Activated T-helper 2 cell treated with anti-CD3 and anti-CD28 coated beads, Interferon-gamma antibody, Interleukin-2, Interleukin-4, amounts not matched to agents 10 μg/mL and 5 μg/mL and 100 μg/mL, durations not matched to agents 14 hours and 24 hours and 36 hours (primary cell): ENCODE measurements at regions of chr6 and their contacts with region 1.

Region 1: GRCh38 chr6:41560431-41561192 is 14.4 kb downstream of the FOXP4 start:
- DNase-seq: peak; percentile 77
- H3K4me3 Mint-ChIP-seq: peak overlapping the region; percentile 81
- H3K27ac Mint-ChIP-seq: peak overlapping the region; percentile 50
- H3K4me1 Mint-ChIP-seq: peaks cover 14% of the 10 kb centered on the region
- H3K27me3 Mint-ChIP-seq: peaks cover 19% of the 10 kb centered on the region

Region 2: DNA sequence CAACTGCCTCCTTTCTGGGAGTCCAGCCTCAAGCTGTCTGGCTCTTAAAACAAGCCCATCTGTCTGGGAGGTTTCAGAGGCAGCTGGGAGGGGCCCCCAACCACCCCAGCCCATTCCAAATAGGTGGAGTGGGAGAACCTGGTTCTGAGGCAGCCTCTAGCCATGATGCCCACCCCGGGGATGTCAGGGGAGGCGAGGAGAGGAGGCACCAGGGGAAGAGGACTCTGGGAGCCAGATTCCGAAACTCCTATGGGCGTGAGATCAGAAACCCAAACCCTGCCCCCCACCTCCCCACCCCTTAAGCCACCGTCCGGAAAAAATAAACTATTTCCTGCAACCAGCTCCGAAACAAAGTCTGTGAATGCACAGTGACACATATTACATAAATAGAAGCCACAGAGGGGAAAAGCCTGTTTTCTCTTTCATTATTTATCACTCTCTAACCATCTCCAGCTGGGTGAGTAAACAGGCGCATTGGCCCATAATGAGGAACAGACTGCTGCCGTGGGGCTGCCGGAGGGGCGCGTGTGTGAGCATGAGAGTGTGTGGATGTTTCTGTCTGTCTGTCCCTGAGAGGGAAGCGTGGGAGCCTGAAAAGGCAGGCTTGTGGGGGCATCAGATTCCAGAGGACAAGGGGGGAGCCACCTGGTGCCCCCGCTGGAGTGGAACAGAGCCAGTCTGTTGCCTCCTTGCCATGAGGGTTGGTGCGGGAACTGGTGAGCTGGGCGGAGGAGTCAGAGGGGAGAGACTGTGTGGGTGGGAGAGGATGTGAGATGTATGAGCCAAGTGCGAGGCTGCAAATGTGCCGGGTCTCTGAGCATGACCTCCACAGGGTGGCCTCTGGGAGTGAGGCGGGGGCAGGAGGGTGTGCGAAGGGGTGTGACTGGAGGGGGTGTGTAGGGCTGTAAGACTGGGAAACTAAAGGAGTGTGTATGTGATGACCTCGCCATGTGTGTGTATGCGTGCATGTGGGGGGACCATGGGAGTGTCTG is 28.7 kb before region 1 on chr6:
- intact Hi-C with region 1: loop called (anchors 1 kb)
- DNase-seq: peak; percentile 45
- H3K4me3 Mint-ChIP-seq: peak overlapping the region; percentile 53
- H3K27ac Mint-ChIP-seq: peak overlapping the region; percentile 70
- H3K4me1 Mint-ChIP-seq: peaks cover 16% of the 10 kb centered on the region
- H3K27me3 Mint-ChIP-seq: peaks cover 73% of the 10 kb centered on the region

Region 3: DNA sequence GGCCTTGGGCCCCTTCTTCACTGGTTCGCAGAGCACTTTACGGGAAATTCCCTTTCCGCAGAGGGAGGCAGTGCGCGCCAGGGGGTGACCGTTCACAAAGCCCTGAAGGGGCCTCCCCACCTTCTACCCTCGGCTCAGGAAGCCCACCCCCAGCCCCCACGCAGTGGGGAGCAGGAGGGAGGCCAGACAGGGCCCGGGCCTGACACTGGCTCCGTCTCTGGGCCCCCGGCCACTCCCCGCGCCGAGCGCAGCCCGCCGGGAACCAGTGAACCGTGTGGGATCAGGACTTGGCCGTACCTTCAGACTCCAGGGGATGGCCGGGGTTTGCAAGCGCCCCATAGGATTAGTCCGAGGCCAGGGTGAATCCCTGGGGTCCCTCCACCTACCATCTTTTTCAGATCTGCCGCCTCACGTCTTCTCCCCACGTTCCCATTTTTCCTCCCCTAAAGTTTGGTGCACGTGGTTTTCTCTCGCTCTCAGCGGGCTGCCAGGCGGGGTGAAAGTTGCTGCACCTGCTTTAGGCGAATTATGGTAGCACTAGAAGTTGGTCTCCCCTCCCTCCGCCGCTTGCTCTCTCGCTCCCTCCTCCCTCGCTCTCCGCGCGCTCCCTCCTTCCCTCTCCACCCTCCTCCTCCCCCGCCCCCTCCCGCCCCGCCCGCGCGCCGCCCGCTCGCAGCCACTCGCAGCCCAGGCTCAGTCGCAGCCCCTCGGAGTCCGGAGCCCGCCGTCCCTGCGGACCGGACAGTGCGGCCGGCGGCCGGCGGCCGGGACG is 14.7 kb before region 1 on chr6 and contains the start of gene FOXP4:
- intact Hi-C with region 1: loop called (anchors 1 kb)
- DNase-seq: peak; percentile 77
- H3K4me3 Mint-ChIP-seq: peak within 1 kb of the TSS; percentile 86
- H3K27ac Mint-ChIP-seq: peak within 1 kb of the TSS; percentile 50
- H3K4me1 Mint-ChIP-seq: peaks cover 22% of the 10 kb centered on the region
- H3K27me3 Mint-ChIP-seq: peaks cover 72% of the 10 kb centered on the region
- total RNA-seq, gene FOXP4: 9.6 and 9.7 TPM in 2 replicates

Region 4: GRCh38 chr6:41622206-41622958 is 61.8 kb after region 1 on chr6:
- intact Hi-C with region 1: no loop called
- DNase-seq: no peak
- H3K4me3 Mint-ChIP-seq: no peak overlapping the region
- H3K27ac Mint-ChIP-seq: no peak overlapping the region
- H3K4me1 Mint-ChIP-seq: peaks cover 6% of the 10 kb centered on the region
- H3K27me3 Mint-ChIP-seq: peaks cover 19% of the 10 kb centered on the region

Region 5: GRCh38 chr6:43059168-43060033 is 1498.8 kb after region 1 on chr6 and contains the starts of genes KLC4 and MRPL2:
- intact Hi-C with region 1: loop called (anchors 10 kb)
- DNase-seq: peak; percentile 96
- H3K4me3 Mint-ChIP-seq: peak within 1 kb of the TSS; percentile 93
- H3K27ac Mint-ChIP-seq: peak within 1 kb of the TSS; percentile 98
- H3K4me1 Mint-ChIP-seq: peaks cover 28% of the 10 kb centered on the region
- H3K27me3 Mint-ChIP-seq: no peaks in the 10 kb centered on the region
- total RNA-seq, gene KLC4: 11.7 and 14.1 TPM in 2 replicates
- total RNA-seq, gene MRPL2: 76.0 and 76.6 TPM in 2 replicates